Left cardiac atrium (tissue), 4 donors: ENCODE measurements at regions of chr10 and their contacts with region 1.

Region 1: GRCh38 chr10:96395931-96396877 is 37.4 kb upstream of the OPALIN start:
- DNase-seq: peak; percentile 76
- ATAC-seq: peak; percentile 68 to 75

Region 2: GRCh38 chr10:96513698-96514561 is 117.7 kb after region 1 on chr10 and contains the start of gene TLL2:
- intact Hi-C with region 1: loop called (anchors 2 to 5 kb)
- DNase-seq: peak; percentile 90
- ATAC-seq: peak; percentile 96 to 97
- total RNA-seq, gene TLL2: 1.5 to 11.5 TPM

Region 3: GRCh38 chr10:96743988-96744585 is 347.9 kb after region 1 on chr10:
- intact Hi-C with region 1: loop called in 1 of 2 experiments (anchors 10 kb)
- DNase-seq: no peak
- ATAC-seq: peak in 1 of 2 donors; percentile 25

Region 4: GRCh38 chr10:97025613-97026242 is 629.5 kb after region 1 on chr10:
- intact Hi-C with region 1: loop called in 1 of 2 experiments (anchors 10 kb)
- DNase-seq: peak; percentile 52
- ATAC-seq: peak; percentile 34 to 61

Region 5: GRCh38 chr10:97701438-97702069 is 1305.3 kb after region 1 on chr10:
- intact Hi-C with region 1: loop called in 1 of 2 experiments (anchors 5 kb)
- DNase-seq: no peak
- ATAC-seq: peak; percentile 93 to 94